Panc1 (cell line): ENCODE measurements at regions of chr7 and their contacts with region 1.

Region 1: DNA sequence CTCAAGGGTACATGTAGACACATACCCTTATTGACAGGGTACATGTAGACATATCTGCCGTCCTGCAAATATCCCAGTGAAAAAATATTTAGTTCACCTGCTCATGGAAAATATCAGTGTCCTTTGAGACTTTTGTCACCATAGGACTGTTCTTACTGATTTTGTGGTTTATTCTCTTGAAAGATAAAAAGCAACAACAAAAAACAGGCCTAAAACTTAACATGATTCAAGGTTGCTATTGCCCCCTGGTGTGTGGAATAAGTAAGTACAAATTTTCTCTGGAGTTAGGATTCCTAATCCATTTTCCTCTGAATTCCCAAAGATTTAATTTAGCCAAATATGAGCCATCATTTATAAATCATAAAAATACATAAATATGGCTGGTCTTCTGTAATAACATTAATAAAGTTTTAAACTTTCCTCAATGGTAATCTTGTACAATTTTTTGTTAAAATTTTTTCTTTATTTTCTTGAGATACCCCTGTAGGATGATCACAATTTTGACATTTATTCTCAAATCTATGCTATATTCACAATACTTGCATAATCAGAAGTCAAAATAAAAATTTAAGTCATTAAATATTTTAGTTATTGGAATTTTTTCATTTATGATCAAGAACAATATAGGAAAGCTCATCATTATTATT is 741.4 kb upstream of the POT1 start:
- DNase-seq: peak; percentile 30
- ATAC-seq: no peak
- H3K4me3 ChIP-seq: no peak overlapping the region
- H3K27ac ChIP-seq: no peak overlapping the region
- H3K4me1 ChIP-seq: no peaks in the 10 kb centered on the region
- H3K27me3 ChIP-seq: no peaks in the 10 kb centered on the region
- CTCF ChIP-seq: peak; percentile 62; the same call in 1 of the 2 replicates

Region 2: GRCh38 chr7:125061776-125062397 is 609.2 kb before region 1 on chr7:
- CTCF ChIA-PET with region 1: no interaction called
- POLR2A ChIA-PET with region 1: no interaction called
- in situ Hi-C with region 1: no loop called
- intact Hi-C with region 1: loop called (anchors 2 kb)
- DNase-seq: peak; percentile 73
- ATAC-seq: peak; percentile 87
- H3K4me3 ChIP-seq: no peak overlapping the region
- H3K27ac ChIP-seq: 0 out of 2 replicates have a peak overlapping the region, but pooled peaks have one; percentile 29
- H3K4me1 ChIP-seq: peaks cover 5% of the 10 kb centered on the region; the same call in 1 of the 2 replicates
- H3K27me3 ChIP-seq: no peaks in the 10 kb centered on the region
- CTCF ChIP-seq: no peak